ENCODE measurements at regions of chr12 and their contacts with region 1.

Region 1: GRCh38 chr12:54579696-54580333 is 8.6 kb downstream of the PPP1R1A start:
- DNase-seq: peak; percentile 93
- H3K4me3 Mint-ChIP-seq: no peak overlapping the region
- H3K27ac Mint-ChIP-seq: no peak overlapping the region
- H3K4me1 Mint-ChIP-seq: peaks cover 5% of the 10 kb centered on the region
- H3K27me3 Mint-ChIP-seq: peaks cover 6% of the 10 kb centered on the region

Region 2: DNA sequence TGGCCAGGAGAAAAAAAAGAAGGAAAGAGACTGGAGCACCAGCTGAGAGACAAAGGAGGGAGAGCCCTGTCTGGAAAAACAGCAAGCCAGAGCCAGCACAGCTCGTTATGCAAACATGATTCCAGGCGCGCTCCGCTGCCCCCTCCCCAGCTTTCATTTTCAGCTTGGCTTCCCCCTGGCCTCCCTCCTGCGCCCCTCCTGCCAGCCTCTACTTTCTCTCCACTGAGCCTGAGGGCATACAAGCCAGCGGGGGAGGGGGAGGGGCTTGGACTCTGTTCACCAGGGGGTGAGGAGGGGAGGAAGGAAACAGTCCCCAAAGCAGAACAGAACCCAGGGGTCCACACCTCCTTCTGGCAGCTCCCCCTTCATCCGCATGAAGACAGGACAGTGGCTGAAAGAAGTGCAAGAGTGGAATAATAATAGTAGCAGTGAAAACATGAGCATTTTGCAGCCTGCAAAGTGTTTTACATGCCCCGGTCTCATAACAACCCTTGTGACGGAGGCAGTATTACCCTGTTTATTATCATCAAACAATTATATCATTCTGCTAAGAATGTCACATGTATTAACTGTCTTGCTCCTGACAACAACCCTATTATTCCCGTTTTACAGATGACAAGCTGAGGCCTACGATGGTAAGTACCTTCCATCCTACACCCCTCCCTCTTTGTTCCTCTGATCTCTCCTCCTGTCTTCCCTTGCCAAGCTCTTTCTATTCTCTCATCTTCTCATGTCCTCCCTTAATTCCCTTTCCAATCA is 415.2 kb before region 1 on chr12:
- CTCF ChIA-PET with region 1: no interaction called
- intact Hi-C with region 1: no loop called
- DNase-seq: no peak
- H3K4me3 Mint-ChIP-seq: no peak overlapping the region
- H3K27ac Mint-ChIP-seq: no peak overlapping the region
- H3K4me1 Mint-ChIP-seq: no peaks in the 10 kb centered on the region
- H3K27me3 Mint-ChIP-seq: peaks cover 6% of the 10 kb centered on the region

Region 3: GRCh38 chr12:54214553-54215406 is 365.0 kb before region 1 on chr12:
- CTCF ChIA-PET with region 1: no interaction called
- intact Hi-C with region 1: no loop called
- DNase-seq: peak; percentile 95
- H3K4me3 Mint-ChIP-seq: peak overlapping the region; percentile 61
- H3K27ac Mint-ChIP-seq: no peak overlapping the region
- H3K4me1 Mint-ChIP-seq: peaks cover 21% of the 10 kb centered on the region
- H3K27me3 Mint-ChIP-seq: peaks cover 4% of the 10 kb centered on the region

Region 4: GRCh38 chr12:54390668-54391551 is 188.9 kb before region 1 on chr12:
- CTCF ChIA-PET with region 1: no interaction called
- intact Hi-C with region 1: no loop called
- DNase-seq: peak; percentile 72
- H3K4me3 Mint-ChIP-seq: peak overlapping the region; percentile 55
- H3K27ac Mint-ChIP-seq: no peak overlapping the region
- H3K4me1 Mint-ChIP-seq: peaks cover 28% of the 10 kb centered on the region
- H3K27me3 Mint-ChIP-seq: no peaks in the 10 kb centered on the region

Region 5: DNA sequence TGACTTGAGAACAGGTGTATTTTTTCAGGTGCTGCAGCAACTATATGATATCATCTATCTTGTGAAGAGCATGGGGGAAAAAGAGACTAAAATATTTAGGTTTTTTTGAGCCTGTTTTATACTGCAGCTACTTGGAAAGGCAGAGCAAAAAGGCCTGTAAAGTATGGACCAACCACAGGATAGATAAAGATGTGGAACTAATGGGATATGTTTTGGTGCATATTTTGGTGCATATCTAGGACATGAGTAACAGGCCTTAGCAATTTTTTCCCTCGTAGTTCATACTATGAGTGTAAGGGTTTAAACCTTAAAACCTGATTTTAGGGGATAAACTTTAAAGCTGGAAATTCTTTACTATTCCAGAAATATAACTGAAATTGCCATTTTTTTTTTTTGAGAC is 100.4 kb before region 1 on chr12:
- CTCF ChIA-PET with region 1: no interaction called
- intact Hi-C with region 1: no loop called
- DNase-seq: no peak
- H3K4me3 Mint-ChIP-seq: no peak overlapping the region
- H3K27ac Mint-ChIP-seq: no peak overlapping the region
- H3K4me1 Mint-ChIP-seq: no peaks in the 10 kb centered on the region
- H3K27me3 Mint-ChIP-seq: no peaks in the 10 kb centered on the region

Region 6: GRCh38 chr12:54549774-54550451 is 29.9 kb before region 1 on chr12:
- CTCF ChIA-PET with region 1: interaction called, 10 read pairs
- intact Hi-C with region 1: no loop called
- DNase-seq: peak; percentile 63
- H3K4me3 Mint-ChIP-seq: peak overlapping the region; percentile 82
- H3K27ac Mint-ChIP-seq: no peak overlapping the region
- H3K4me1 Mint-ChIP-seq: peaks cover 36% of the 10 kb centered on the region
- H3K27me3 Mint-ChIP-seq: peaks cover 6% of the 10 kb centered on the region

Region 7: GRCh38 chr12:54560374-54560858 is 19.4 kb before region 1 on chr12:
- CTCF ChIA-PET with region 1: interaction called, 14 read pairs
- intact Hi-C with region 1: no loop called
- DNase-seq: peak; percentile 97
- H3K4me3 Mint-ChIP-seq: peak overlapping the region; percentile 72
- H3K27ac Mint-ChIP-seq: peak overlapping the region; percentile 80
- H3K4me1 Mint-ChIP-seq: peaks cover 31% of the 10 kb centered on the region
- H3K27me3 Mint-ChIP-seq: peaks cover 3% of the 10 kb centered on the region

Region 8: DNA sequence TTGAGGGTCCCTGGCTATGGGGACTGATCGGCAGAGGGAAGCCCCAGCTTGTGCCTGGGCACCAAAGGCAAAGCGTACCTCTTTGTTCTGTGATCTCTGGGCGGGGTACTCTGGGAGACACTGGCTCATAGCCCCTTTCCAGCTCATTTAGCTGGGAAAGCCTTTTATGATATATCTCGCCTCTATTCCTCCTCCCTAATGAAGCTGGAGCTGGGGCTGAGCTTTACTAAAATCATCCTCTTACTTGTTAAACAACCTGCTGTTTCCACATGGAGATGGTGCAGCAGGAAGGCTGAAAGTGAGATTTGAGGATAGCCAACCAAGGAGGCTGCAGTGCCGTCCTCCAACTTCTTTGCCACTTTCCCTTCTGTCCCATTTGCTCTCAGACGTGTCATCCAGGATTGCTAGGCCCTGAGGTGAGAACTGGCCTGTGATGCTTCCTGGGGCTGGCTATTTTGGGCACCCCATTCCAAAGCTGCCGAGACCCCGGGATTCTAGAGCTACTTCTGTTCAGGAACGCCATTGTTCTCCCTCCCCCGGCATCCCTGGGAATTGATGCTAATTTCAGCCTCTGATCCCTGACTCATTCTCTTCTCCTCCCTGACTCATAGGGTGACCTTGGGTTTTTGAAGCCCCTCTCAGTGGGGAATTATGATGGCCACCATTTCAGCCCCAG is 14.4 kb before region 1 on chr12:
- CTCF ChIA-PET with region 1: interaction called, 14 read pairs
- intact Hi-C with region 1: no loop called
- DNase-seq: no peak
- H3K4me3 Mint-ChIP-seq: no peak overlapping the region
- H3K27ac Mint-ChIP-seq: no peak overlapping the region
- H3K4me1 Mint-ChIP-seq: peaks cover 20% of the 10 kb centered on the region
- H3K27me3 Mint-ChIP-seq: no peaks in the 10 kb centered on the region

Region 9: DNA sequence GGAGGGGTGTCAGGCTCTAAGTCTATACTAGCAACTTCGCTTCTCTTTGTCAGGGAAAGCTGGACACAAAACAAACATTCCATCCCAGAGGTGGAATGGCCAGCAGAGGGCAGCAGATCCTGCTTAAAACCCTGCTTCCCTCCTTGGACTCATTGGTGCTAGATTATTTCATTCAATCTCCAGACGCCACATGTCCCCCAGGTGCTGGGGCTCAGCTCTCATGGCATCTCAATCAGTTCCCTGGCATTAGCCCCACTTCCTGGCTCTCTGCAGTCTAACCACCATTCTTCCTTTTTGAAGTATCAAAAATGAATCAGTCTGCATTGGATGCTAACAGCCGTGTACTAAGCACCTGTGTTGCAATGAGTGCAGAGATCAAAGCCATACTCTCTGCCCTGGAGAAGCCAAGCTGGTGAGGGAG is 16.7 kb after region 1 on chr12:
- CTCF ChIA-PET with region 1: interaction called, 96 read pairs
- intact Hi-C with region 1: loop called (anchors 1 kb)
- DNase-seq: peak; percentile 77
- H3K4me3 Mint-ChIP-seq: no peak overlapping the region
- H3K27ac Mint-ChIP-seq: no peak overlapping the region
- H3K4me1 Mint-ChIP-seq: peaks cover 5% of the 10 kb centered on the region
- H3K27me3 Mint-ChIP-seq: peaks cover 2% of the 10 kb centered on the region

Region 10: DNA sequence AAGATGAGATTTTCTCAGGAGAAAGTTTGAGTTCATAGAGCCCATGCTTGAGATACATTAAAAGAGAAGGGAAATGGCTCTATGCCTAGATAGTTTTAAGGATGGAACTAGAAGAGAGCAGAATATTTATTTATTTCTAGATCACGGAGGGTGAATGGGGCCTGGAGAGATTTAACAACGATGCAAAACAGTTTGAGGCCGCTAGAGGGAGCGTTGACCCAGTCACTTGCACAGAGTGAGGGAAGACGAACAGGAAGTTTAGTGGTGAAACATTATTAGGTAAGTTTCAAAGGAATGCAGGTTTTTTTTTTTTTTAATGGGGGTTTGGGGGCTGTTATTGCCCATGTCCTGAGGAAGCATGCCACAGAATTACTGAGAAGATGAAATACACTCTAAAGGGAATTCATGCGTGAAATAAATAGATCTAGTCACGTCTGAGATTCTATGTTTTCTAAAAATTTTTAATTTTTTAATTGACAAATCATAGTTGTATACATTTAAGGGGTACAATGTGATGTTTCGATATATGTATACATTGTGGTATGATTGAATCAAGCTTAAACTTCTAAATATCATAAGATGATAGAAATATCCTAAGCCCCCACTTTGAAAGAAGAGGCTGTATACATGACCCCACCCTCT is 23.5 kb after region 1 on chr12:
- CTCF ChIA-PET with region 1: interaction called, 96 read pairs
- intact Hi-C with region 1: no loop called
- DNase-seq: peak; percentile 87
- H3K4me3 Mint-ChIP-seq: no peak overlapping the region
- H3K27ac Mint-ChIP-seq: no peak overlapping the region
- H3K4me1 Mint-ChIP-seq: peaks cover 2% of the 10 kb centered on the region
- H3K27me3 Mint-ChIP-seq: no peaks in the 10 kb centered on the region